ENCODE measurements at regions of chr7 and their contacts with region 1.

Region 1: DNA sequence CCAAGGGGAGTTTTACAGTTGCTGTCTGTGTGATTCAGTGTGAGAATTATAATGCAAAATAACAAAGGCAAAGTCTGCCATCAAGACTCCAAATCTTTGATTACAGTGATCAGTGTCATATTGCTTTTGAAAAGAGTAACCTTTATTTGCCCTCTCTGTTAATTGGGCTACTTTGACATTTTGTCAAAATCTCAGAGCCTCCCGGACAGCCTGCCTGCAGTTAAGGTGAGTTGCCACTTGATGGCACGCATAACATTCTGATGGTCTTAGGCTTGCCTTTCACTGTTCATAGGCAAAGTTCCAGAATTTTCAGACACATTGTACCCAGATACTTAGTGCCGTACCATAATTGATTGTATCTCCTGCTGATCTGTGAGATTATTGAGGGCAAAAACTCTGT is 253.5 kb downstream of the ABCA13 start:
- H3K4me3 Mint-ChIP-seq: no peak overlapping the region
- H3K27ac Mint-ChIP-seq: no peak overlapping the region
- H3K4me1 Mint-ChIP-seq: peaks cover 5% of the 10 kb centered on the region
- H3K27me3 Mint-ChIP-seq: no peaks in the 10 kb centered on the region

Region 2: DNA sequence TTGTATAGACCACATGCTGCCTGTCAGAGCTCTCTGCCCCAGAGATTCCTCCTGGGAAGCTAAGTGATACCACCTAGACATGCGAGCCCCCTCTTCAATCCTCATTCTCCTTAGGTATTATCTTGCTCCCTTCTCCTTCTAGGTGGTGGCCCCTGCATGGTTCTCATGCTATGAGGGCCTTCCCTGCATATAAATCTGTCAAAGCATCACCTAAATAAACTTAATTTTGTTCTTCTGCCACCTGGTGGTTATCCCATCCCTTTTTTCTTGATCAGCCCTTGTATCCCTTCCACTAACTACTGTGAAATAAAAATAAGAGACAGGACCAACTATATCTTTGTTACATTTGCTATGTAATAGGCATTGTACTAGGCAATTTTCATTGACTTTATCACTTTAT is 741.7 kb after region 1 on chr7:
- intact Hi-C with region 1: loop called (anchors 10 kb)
- H3K4me3 Mint-ChIP-seq: no peak overlapping the region
- H3K27ac Mint-ChIP-seq: no peak overlapping the region
- H3K4me1 Mint-ChIP-seq: no peaks in the 10 kb centered on the region
- H3K27me3 Mint-ChIP-seq: no peaks in the 10 kb centered on the region

Measured in dendritic cell treated with granulocyte-macrophage colony-stimulating factor and Interleukin-4, amounts not matched to agents 40 ng/mL and 50 ng/mL, for 4 days (primary cell).